Astrocyte of the spinal cord (primary cell): ENCODE measurements at regions of chr2 and their contacts with region 1.

Region 1: DNA sequence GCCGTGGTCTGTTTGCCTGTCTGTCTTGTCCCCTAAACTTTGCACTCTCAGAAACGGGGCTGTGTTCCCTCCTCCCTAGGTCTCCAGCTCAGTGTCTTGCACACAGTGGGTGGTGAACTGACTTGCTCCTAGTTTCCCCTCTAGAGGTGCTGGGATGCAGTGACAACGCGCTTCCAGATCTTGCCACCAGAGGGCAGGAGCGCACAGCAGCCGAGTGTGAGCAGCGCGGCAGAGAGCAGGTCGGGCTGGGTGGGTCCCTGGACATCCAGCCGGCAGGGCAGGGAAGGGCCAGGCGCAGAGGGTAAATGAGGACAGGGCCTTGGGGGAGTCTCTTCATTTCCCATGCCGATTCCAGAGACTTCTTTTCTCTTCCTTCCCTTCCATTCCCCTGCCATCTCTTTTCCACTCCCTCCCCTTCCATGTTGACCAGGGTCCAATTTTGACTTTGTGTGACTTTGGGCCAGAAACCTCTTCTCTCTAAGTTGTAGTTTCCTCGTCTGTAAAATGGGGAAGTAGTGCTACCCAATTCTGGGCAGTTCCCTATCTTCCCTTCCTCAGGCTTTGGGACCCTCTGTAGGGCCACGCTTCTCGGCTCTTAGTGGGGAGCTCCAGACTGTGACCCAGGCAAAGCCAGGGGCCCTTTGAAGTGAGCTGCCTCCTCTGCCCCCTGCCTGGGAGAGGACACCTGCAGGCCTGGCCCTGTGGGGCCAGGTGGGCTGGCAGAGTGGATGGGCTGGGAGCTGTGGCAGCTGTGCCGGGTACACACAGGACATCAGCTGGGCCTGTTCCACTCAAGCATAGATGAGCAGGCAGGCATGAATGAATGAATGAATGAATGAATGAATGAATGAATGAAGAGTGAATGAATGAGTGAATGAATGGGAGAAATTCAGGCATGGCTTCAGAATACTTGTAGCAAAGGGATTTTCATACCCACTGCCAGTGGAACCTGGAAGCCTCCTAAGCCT is 43.3 kb upstream of the TAF1B start:
- DNase-seq: peak; percentile 74
- H3K4me3 ChIP-seq: no peak overlapping the region
- CTCF ChIP-seq: peak; percentile 99

Region 2: GRCh38 chr2:9889812-9890261 is 89.9 kb after region 1 on chr2:
- in situ Hi-C with region 1: no loop called
- DNase-seq: no peak
- H3K4me3 ChIP-seq: no peak overlapping the region
- CTCF ChIP-seq: no peak

Region 3: GRCh38 chr2:10043906-10044601 is 244.1 kb after region 1 on chr2:
- in situ Hi-C with region 1: loop called (anchors 25 kb)
- DNase-seq: peak; percentile 91
- H3K4me3 ChIP-seq: peak overlapping the region; percentile 43
- CTCF ChIP-seq: no peak